Head of caudate nucleus (tissue), 42 donors: ENCODE measurements at regions of chr14 and their contacts with region 1.

Region 1: GRCh38 chr14:24828486-24828885 is 194.5 kb upstream of the GZMB start:
- DNase-seq: no peak

Region 2: DNA sequence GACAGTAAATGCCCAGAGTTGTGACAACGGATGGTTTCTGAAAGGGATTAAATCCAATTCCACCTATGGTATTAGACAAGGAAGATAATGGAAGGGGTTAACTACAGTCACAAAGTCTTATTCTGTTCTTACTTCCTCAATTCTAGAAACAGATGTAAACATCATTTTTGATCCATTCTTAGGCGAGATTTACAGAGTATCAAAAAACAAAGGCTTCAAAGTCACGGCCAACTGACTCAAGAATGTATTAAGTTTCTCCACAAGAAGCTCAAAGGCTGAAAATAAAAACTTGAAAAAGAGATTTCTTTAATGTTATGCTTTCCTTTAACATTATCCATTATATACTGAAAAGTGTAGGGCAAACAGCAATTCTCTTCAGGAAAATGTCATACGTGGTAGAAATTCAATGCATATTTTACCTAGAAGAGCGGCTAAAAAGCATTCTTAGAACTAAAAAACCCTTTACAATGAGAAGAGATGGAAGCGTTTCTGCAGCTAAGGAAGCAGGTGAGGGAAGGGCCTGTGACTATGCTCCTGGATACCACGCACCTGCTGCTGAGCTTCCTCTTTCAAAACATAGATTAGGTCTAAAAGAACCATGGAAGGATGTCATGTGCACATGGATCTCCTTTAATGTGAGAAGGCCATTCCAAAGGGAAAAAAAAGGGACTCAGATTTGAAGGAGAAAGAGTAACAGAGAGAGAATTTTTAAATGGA is 35.6 kb after region 1 on chr14:
- intact Hi-C with region 1: no loop called
- DNase-seq: peak in 3 of 42 donors; percentile 23 to 32 (median 28)

Region 3: GRCh38 chr14:24875991-24876878 is 47.7 kb after region 1 on chr14:
- intact Hi-C with region 1: loop called (anchors 10 kb)
- DNase-seq: peak in 3 of 42 donors; percentile 34 to 41 (median 36)

Region 4: GRCh38 chr14:25006961-25007795 is 178.7 kb after region 1 on chr14:
- intact Hi-C with region 1: no loop called
- DNase-seq: peak in 7 of 42 donors; percentile 4 to 58 (median 26)